Activated naive CD4-positive, alpha-beta T cell treated with anti-CD3 and anti-CD28 coated beads for 36 hours (primary cell): ENCODE measurements at regions of chr6 and their contacts with region 1.

Region 1: DNA sequence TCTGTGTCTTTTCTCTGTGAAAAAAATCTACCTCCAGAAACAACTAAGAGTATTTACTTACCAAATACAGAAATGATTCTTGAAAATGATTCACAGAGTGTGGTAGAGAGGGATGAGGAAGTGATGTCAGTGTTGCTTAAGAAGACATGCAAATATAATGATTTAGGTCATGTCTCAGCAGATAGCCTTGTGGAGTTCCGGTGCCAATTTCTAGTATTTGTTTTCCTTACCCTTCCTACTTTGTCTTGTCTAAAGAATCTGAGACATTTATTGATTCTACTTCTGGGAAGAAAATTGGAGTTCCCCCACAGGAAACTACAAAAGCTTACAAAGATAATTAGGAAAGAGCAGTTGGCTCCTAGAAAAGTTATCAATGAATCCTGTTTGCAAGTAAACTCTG is 68.8 kb downstream of the GJA1 start:
- DNase-seq: no peak
- H3K4me3 Mint-ChIP-seq: no peak overlapping the region
- H3K27ac Mint-ChIP-seq: peak overlapping the region; percentile 62
- H3K4me1 Mint-ChIP-seq: peaks cover 16% of the 10 kb centered on the region
- H3K27me3 Mint-ChIP-seq: no peaks in the 10 kb centered on the region

Region 2: DNA sequence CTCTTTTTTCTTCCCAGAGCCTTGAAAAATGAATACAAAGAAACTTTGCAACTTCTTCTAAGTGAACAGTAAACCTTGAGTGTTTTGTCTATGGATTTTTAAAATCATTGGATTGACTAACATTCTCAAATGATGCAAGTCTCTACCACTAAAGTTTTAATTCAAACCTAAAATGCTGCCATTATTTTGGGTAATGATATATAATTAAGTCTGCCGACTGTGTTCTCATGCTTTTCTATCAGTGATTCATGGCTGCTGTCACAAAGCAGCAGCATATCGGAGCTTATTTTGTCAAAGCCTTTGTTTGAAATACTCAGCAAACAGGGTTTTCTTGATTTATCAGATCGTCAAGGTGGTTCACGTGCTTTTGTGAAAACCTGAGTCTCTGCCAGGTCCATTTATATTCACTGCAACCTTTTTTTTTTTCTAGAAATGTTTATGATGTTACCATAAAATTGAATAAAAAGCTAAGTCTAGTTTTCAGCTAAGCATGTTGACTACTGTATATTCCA is 27.5 kb after region 1 on chr6:
- CTCF ChIA-PET with region 1: no interaction called
- intact Hi-C with region 1: no loop called
- DNase-seq: no peak
- H3K4me3 Mint-ChIP-seq: no peak overlapping the region
- H3K27ac Mint-ChIP-seq: no peak overlapping the region
- H3K4me1 Mint-ChIP-seq: no peaks in the 10 kb centered on the region
- H3K27me3 Mint-ChIP-seq: no peaks in the 10 kb centered on the region

Region 3: GRCh38 chr6:121652726-121653623 is 148.7 kb after region 1 on chr6:
- CTCF ChIA-PET with region 1: no interaction called
- intact Hi-C with region 1: loop called (anchors 5 kb)
- DNase-seq: peak; percentile 8
- H3K4me3 Mint-ChIP-seq: no peak overlapping the region
- H3K27ac Mint-ChIP-seq: no peak overlapping the region
- H3K4me1 Mint-ChIP-seq: peaks cover 40% of the 10 kb centered on the region
- H3K27me3 Mint-ChIP-seq: no peaks in the 10 kb centered on the region

Region 4: GRCh38 chr6:121771937-121772720 is 267.9 kb after region 1 on chr6:
- CTCF ChIA-PET with region 1: no interaction called
- intact Hi-C with region 1: loop called (anchors 5 kb)
- DNase-seq: no peak
- H3K4me3 Mint-ChIP-seq: no peak overlapping the region
- H3K27ac Mint-ChIP-seq: no peak overlapping the region
- H3K4me1 Mint-ChIP-seq: peaks cover 16% of the 10 kb centered on the region
- H3K27me3 Mint-ChIP-seq: peaks cover 2% of the 10 kb centered on the region

Region 5: GRCh38 chr6:121830736-121831135 is 326.5 kb after region 1 on chr6:
- CTCF ChIA-PET with region 1: no interaction called
- intact Hi-C with region 1: no loop called
- DNase-seq: no peak
- H3K4me3 Mint-ChIP-seq: no peak overlapping the region
- H3K27ac Mint-ChIP-seq: no peak overlapping the region
- H3K4me1 Mint-ChIP-seq: peaks cover 5% of the 10 kb centered on the region
- H3K27me3 Mint-ChIP-seq: peaks cover 2% of the 10 kb centered on the region

Region 6: GRCh38 chr6:122399384-122400158 is 895.3 kb after region 1 on chr6 and contains the start of gene HSF2:
- CTCF ChIA-PET with region 1: no interaction called
- intact Hi-C with region 1: loop called (anchors 5 kb)
- DNase-seq: peak; percentile 97
- H3K4me3 Mint-ChIP-seq: peak within 1 kb of the TSS; percentile 97
- H3K27ac Mint-ChIP-seq: peak within 1 kb of the TSS; percentile 95
- H3K4me1 Mint-ChIP-seq: peaks cover 42% of the 10 kb centered on the region
- H3K27me3 Mint-ChIP-seq: no peaks in the 10 kb centered on the region
- total RNA-seq, gene HSF2: 22.0 to 27.0 TPM